ENCODE measurements at regions of chr22 and their contacts with region 1.

Region 1: GRCh38 chr22:38802671-38803121 is 8.8 kb upstream of the DNAL4 start:
- DNase-seq: peak; percentile 98
- H3K4me3 Mint-ChIP-seq: no peak overlapping the region
- H3K27ac Mint-ChIP-seq: peak overlapping the region; percentile 87
- H3K4me1 Mint-ChIP-seq: peaks cover 11% of the 10 kb centered on the region
- H3K27me3 Mint-ChIP-seq: peaks cover 14% of the 10 kb centered on the region
- CTCF ChIP-seq: no peak

Region 2: GRCh38 chr22:38681784-38682335 is 120.8 kb before region 1 on chr22 and contains the start of gene TOMM22:
- CTCF ChIA-PET with region 1: no interaction called
- POLR2A ChIA-PET with region 1: no interaction called
- intact Hi-C with region 1: no loop called
- DNase-seq: peak; percentile 83
- H3K4me3 Mint-ChIP-seq: peak within 1 kb of the TSS; percentile 92
- H3K27ac Mint-ChIP-seq: peak within 1 kb of the TSS; percentile 99
- H3K4me1 Mint-ChIP-seq: peaks cover 5% of the 10 kb centered on the region
- H3K27me3 Mint-ChIP-seq: no peaks in the 10 kb centered on the region
- CTCF ChIP-seq: peak; percentile 39
- total RNA-seq, gene TOMM22: 60.4 and 71.5 TPM in 2 replicates

Region 3: GRCh38 chr22:38755911-38756532 is 46.7 kb before region 1 on chr22 and contains the start of gene SUN2:
- CTCF ChIA-PET with region 1: no interaction called
- POLR2A ChIA-PET with region 1: no interaction called
- intact Hi-C with region 1: no loop called
- DNase-seq: peak; percentile 84
- H3K4me3 Mint-ChIP-seq: peak within 1 kb of the TSS; percentile 81
- H3K27ac Mint-ChIP-seq: peak within 1 kb of the TSS; percentile 82
- H3K4me1 Mint-ChIP-seq: peaks cover 19% of the 10 kb centered on the region
- H3K27me3 Mint-ChIP-seq: no peaks in the 10 kb centered on the region
- CTCF ChIP-seq: no peak
- total RNA-seq, gene SUN2: 51.9 and 66.8 TPM in 2 replicates

Region 4: DNA sequence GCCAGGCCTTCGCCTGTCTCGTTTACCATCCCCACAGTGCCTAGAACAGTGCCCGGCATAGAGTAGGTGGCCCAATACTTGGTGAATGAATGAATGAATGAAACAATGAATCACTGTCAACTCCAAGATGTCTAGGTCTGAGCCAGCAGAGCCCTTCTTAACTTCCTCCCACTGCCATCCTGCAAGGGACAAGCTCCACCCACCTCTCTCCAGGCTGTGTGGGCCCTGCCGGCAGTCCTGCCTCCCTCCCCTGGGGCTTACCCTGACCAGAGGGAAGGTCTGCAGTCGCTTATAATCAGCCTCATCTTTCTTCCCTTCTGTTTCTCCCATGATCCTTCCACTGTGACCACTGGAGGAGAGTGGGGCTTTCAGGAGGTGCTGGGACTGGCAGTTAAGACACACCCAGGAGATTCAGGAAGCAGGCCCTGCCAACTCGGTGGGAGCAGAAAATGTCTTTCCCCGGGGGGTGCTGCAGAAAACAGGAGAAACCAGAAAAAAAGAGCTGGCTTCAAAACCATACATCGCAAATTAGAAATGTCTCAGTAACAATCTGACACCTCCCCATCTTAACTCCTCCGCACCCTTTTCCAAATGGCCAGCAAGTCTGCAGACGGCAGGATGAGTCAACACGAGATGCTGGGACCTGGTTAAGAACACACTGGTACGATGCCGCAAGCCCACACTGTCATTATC is 20.1 kb before region 1 on chr22:
- CTCF ChIA-PET with region 1: no interaction called
- POLR2A ChIA-PET with region 1: no interaction called
- intact Hi-C with region 1: no loop called
- DNase-seq: no peak
- H3K4me3 Mint-ChIP-seq: no peak overlapping the region
- H3K27ac Mint-ChIP-seq: no peak overlapping the region
- H3K4me1 Mint-ChIP-seq: no peaks in the 10 kb centered on the region
- H3K27me3 Mint-ChIP-seq: no peaks in the 10 kb centered on the region
- CTCF ChIP-seq: no peak

Region 5: DNA sequence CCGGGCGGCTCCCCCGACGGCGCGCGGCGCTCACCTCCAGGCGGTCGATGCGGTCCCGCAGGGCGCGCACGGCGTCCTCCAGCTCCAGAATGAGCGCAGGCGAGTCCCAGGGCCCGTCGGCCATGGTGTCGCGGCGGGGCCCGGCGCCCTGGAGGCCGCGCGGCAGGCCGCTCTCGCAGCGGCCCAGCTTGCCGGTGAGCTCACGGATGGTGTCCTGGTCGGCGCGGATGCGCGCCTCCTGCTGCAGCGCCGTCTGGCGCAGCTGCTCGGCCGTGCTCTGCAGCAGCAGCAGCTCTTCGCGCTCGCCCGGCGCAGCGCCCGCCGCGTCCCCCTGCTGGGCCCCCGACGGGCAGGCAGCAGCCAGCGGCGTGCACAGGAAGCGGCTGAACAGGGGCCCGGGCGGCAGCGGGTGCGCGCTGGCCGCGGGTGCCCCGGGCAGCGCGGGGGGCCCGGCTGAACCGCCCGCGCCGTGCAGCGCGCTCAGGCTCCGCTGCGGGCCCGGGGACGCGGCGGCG is 40.6 kb after region 1 on chr22:
- CTCF ChIA-PET with region 1: interaction called, 3 read pairs
- POLR2A ChIA-PET with region 1: no interaction called
- intact Hi-C with region 1: loop called (anchors 5 kb)
- DNase-seq: no peak
- H3K4me3 Mint-ChIP-seq: peak overlapping the region; percentile 62
- H3K27ac Mint-ChIP-seq: no peak overlapping the region
- H3K4me1 Mint-ChIP-seq: peaks cover 14% of the 10 kb centered on the region
- H3K27me3 Mint-ChIP-seq: peaks cover 51% of the 10 kb centered on the region
- CTCF ChIP-seq: no peak

Measured in MCF 10A (cell line).